B cell (primary cell): ENCODE measurements at regions of chr20 and their contacts with region 1.

Region 1: DNA sequence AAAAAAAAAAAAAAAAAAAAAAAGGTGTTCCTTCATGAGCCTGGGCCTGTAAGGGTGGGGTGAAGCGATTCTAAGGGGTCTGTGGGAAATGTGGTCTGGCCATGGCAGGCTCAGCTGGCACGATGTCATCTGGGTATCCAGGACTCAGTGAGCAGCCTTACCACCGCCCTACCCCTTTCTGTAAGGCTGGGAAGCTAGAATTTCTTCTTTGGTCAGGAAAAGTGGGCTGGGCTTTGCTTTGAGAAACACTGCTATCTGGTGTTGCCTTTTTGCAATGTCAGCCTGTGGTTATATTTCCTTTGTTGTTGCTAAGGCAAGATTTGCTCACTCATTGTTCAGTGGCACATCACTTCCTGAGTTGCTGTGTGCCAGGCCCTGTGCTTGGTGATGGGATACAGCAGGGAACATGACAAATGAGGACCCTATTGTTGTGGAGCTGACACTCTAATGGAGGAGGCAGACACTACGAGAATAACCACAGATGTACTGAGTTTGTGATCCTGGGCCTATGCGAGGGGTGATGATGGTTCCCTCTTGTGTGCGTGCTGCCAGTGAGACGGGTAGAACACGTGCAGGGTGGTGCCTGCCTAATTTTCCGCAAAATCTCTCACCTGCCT is 45.9 kb upstream of the ZNFX1 start:
- DNase-seq: peak; percentile 25
- ATAC-seq: no peak
- H3K4me3 ChIP-seq: no peak overlapping the region
- H3K4me3 Mint-ChIP-seq: no peak overlapping the region
- H3K27ac ChIP-seq: no peak overlapping the region
- H3K27ac Mint-ChIP-seq: no peak overlapping the region
- H3K4me1 ChIP-seq: peaks cover 7 to 9% of the 10 kb centered on the region in 2 donors
- H3K4me1 Mint-ChIP-seq: peaks cover 11% of the 10 kb centered on the region
- H3K27me3 ChIP-seq: peaks cover 0 to 33% (median 15%) of the 10 kb centered on the region in 4 experiments
- H3K27me3 Mint-ChIP-seq: peaks cover 36% of the 10 kb centered on the region
- CTCF ChIP-seq: no peak

Region 2: DNA sequence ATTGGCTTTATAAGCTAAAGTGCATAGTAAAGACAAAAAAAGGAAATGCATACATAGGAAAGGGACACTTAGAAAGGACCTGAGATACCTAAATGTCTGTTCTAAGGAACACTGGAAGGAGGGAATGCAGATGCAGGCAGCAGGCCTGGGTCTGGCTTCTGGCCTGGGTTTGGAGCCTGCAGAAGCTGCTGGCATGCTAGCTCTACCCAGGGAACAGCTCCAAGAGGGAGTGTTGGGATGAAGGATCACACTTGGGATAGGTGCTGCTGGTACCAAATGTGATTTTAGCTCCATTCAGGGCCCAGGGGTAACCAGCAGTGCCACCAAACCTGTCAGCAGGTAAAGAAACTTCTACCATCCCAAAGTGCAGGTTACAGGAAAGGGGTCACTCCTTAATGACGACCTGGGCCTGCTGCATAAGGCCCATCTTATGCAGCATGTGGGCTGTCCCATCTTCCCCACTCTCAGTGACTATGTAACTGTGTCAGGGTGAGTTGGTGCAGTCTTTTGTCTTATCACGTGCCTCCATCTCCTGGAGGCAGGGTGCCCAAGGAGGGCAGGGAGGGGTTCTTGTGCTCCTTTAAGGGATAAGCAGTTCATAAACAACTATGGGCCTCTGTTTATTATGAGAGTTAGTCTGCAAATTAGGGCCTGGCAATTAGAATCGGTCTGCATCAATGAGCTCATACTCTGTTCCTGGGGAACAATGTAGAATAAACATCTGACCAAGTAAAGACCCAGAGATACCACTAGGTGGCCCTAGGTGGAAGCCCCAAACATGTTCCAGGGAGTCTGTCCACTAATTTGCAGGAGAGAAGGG is 77.6 kb before region 1 on chr20:
- CTCF ChIA-PET with region 1: interaction called, 9 read pairs
- POLR2A ChIA-PET with region 1: no interaction called
- intact Hi-C with region 1: loop called (anchors 2 kb)
- DNase-seq: peak; percentile 57
- ATAC-seq: peak; percentile 60
- H3K4me3 ChIP-seq: no peak overlapping the region
- H3K4me3 Mint-ChIP-seq: no peak overlapping the region
- H3K27ac ChIP-seq: no peak overlapping the region
- H3K27ac Mint-ChIP-seq: peak overlapping the region; percentile 64
- H3K4me1 ChIP-seq: no peaks in the 10 kb centered on the region
- H3K4me1 Mint-ChIP-seq: peaks cover 3% of the 10 kb centered on the region
- H3K27me3 ChIP-seq: no peaks in the 10 kb centered on the region
- H3K27me3 Mint-ChIP-seq: no peaks in the 10 kb centered on the region
- CTCF ChIP-seq: peak; percentile 64

Region 3: DNA sequence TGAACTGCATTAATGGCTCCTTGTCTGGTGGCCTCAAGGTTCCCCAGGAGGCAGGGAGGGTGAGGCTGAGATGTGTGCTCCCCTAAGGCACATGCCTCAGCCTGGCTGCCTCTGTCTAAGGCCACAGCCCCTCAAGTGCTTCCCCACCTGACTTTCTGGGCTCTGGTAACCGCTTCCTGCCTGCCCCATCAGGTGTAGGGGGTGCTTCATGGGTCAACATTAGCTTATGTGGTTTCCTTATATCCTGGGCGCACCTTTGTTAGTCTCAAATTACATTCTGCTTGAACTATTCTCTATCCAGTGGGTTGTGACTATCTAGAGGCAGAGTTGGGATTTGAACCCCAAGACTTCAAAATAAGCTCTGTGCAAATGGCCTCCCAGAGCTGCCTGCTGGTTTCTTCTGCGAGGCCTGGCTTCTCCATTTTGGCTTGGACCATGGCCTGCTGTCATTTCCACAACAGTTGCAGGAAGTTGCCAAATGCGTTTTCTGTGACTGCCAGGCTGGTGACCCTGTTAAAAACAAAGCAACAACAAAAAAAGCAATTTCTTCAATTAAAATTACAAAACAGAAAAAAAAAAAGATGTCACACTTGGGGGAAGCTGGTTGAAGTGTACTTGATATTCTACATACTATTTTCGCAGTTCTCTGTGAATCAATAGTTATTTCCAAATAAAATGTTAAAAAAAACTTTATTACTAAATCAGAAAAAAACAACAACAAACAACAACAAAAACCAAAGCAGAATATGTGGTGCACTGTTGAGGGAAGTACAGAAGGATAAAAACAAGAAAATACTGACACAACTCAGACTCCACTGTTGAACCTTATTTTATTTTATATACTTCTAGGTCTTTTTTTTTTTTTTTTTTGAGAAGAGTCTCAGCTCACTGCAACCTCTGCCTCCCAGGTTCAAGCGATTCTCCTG is 25.9 kb before region 1 on chr20:
- CTCF ChIA-PET with region 1: no interaction called
- POLR2A ChIA-PET with region 1: no interaction called
- intact Hi-C with region 1: no loop called
- DNase-seq: no peak
- ATAC-seq: no peak
- H3K4me3 ChIP-seq: no peak overlapping the region
- H3K4me3 Mint-ChIP-seq: no peak overlapping the region
- H3K27ac ChIP-seq: no peak overlapping the region
- H3K27ac Mint-ChIP-seq: no peak overlapping the region
- H3K4me1 ChIP-seq: no peaks in the 10 kb centered on the region
- H3K4me1 Mint-ChIP-seq: peaks cover 3% of the 10 kb centered on the region
- H3K27me3 ChIP-seq: no peaks in the 10 kb centered on the region
- H3K27me3 Mint-ChIP-seq: no peaks in the 10 kb centered on the region
- CTCF ChIP-seq: no peak

Region 4: GRCh38 chr20:49310705-49311104 is 13.0 kb before region 1 on chr20:
- CTCF ChIA-PET with region 1: no interaction called
- POLR2A ChIA-PET with region 1: no interaction called
- intact Hi-C with region 1: no loop called
- DNase-seq: no peak
- ATAC-seq: no peak
- H3K4me3 ChIP-seq: no peak overlapping the region
- H3K4me3 Mint-ChIP-seq: no peak overlapping the region
- H3K27ac ChIP-seq: no peak overlapping the region
- H3K27ac Mint-ChIP-seq: no peak overlapping the region
- H3K4me1 ChIP-seq: no peaks in the 10 kb centered on the region
- H3K4me1 Mint-ChIP-seq: no peaks in the 10 kb centered on the region
- H3K27me3 ChIP-seq: no peaks in the 10 kb centered on the region
- H3K27me3 Mint-ChIP-seq: peaks cover 33% of the 10 kb centered on the region
- CTCF ChIP-seq: no peak

Region 5: DNA sequence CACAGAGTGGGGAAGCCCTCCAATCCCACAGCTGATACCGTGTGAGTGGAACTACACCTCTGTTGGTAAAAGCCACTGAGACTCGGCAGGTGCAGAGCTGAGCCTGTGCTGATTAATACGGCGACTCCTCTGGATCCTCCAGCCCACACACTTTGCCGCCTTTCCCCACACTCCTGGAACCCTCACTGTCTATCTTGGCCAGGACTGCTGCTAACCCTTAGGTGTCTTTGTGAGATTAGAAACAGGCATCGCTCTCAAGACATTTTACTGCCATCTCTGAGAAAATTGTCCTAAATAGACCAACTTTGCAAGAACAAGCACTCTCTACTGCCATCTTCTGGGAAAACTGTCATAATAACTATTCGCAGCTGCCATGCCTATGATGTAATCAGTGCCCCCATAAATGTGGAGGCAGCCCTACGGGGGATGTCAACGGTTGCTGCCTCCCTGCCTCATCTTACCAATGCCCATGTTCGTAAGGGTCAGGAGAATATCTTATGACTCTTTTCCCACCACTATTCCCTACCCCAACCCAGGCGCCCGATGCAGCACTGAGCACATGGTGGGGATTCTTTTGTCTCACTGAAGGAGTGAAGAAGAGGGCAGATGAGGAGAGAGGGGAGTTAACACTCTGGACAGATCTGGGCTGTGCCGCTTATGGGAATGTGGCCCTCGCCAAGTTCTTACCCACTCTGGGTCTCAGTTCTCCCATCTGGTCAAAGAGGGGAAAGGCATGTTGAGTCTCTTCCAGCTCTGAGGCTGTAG is 184.9 kb after region 1 on chr20:
- CTCF ChIA-PET with region 1: no interaction called
- POLR2A ChIA-PET with region 1: no interaction called
- intact Hi-C with region 1: no loop called
- DNase-seq: peak; percentile 36
- ATAC-seq: no peak
- H3K4me3 ChIP-seq: no peak overlapping the region
- H3K4me3 Mint-ChIP-seq: no peak overlapping the region
- H3K27ac ChIP-seq: no peak overlapping the region
- H3K27ac Mint-ChIP-seq: no peak overlapping the region
- H3K4me1 ChIP-seq: no peaks in the 10 kb centered on the region
- H3K4me1 Mint-ChIP-seq: peaks cover 3% of the 10 kb centered on the region
- H3K27me3 ChIP-seq: peaks cover 0 to 22% (median 1%) of the 10 kb centered on the region in 4 experiments
- H3K27me3 Mint-ChIP-seq: peaks cover 47% of the 10 kb centered on the region
- CTCF ChIP-seq: peak; percentile 32